ENCODE measurements at regions of chr12 and their contacts with region 1.

Region 1: GRCh38 chr12:12916135-12916944 is 25.0 kb downstream of the GPRC5A start:
- DNase-seq: peak; percentile 75 to 89
- H3K4me3 ChIP-seq: no peak overlapping the region
- H3K4me1 ChIP-seq: peaks cover 10% of the 10 kb centered on the region
- H3K27me3 ChIP-seq: no peaks in the 10 kb centered on the region

Region 2: GRCh38 chr12:12983420-12984035 is 67.2 kb after region 1 on chr12:
- in situ Hi-C with region 1: loop called (anchors 5 kb)
- DNase-seq: peak; percentile 63 to 88
- H3K4me3 ChIP-seq: no peak overlapping the region
- H3K4me1 ChIP-seq: peaks cover 21% of the 10 kb centered on the region
- H3K27me3 ChIP-seq: no peaks in the 10 kb centered on the region

Region 3: DNA sequence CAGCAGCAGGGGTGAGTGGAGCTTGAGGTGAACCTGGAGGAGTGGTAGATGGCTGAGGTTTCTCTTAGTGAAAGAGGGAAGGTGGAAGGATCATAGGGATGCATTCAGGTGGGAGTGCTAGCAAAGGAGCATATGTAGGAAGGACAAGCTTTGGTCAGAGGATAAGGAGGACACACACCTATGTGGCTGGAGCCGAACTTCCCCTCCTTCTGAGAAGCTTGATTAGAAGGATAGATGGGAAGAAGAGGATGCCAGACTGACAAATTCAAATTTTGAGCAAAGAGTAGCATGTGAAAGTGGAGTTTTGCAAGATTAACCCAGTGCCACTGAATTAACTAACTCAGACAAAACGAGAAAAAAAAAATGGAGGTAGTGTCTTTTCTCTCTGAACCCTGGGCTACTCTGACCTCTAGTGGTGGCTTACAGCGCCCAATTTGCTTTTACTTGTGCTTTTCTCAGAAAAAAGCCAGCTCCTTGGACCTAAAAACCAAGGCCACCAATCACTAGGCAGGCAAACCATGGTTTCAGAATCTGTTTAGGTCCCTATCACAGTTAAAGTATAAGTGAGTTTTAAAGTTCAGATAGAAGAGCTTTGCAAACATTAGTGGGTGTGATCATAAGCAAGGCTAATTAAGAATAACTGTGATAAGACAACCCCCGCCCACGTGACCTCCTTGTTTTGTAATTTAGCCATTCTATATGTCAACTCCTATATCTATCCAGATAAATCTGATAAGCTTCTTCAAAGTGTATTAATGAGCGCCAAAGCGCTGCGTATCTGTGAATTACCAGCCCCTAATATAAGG is 295.7 kb after region 1 on chr12:
- in situ Hi-C with region 1: loop called (anchors 5 kb)
- DNase-seq: peak; percentile 75 to 82
- H3K4me3 ChIP-seq: no peak overlapping the region
- H3K4me1 ChIP-seq: peaks cover 23% of the 10 kb centered on the region
- H3K27me3 ChIP-seq: no peaks in the 10 kb centered on the region

Region 4: DNA sequence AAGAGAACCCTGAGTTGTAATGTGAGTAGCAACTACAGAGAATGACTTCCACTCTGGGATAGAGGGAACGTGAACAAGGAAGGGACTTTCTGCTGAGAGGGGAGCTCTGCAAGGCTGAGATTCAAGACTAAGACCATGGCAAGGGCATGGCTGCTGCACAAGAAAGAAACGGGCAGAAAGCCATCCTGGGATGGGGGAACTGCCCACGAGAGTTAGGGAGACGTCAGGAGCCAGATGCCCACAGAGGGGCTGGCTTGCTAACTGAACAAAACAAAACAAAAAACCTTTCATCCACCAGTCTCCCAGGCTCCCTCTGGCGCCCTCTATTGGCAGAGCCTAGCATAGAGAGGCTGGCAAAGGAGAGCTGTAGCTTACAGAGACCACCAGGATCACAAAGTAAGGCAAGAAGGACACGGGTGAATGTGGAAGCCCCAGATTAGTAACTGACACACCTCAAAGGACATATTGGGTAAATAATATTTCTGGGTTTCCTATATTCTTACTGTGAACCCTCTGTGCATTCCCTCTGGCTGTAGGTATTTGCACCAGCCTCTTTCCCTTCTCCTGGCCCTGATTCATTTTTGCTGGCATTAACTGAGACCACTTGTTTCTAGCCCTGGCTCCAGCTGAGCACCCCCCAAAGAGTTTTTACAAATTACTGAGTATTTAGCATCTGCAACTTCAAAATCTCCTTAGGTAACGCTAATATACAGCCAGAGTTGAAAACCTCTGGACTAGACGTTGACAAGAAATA is 618.5 kb after region 1 on chr12:
- in situ Hi-C with region 1: loop called (anchors 25 kb)
- DNase-seq: peak; percentile 53 to 90
- H3K4me3 ChIP-seq: no peak overlapping the region
- H3K4me1 ChIP-seq: no peaks in the 10 kb centered on the region
- H3K27me3 ChIP-seq: no peaks in the 10 kb centered on the region

Region 5: DNA sequence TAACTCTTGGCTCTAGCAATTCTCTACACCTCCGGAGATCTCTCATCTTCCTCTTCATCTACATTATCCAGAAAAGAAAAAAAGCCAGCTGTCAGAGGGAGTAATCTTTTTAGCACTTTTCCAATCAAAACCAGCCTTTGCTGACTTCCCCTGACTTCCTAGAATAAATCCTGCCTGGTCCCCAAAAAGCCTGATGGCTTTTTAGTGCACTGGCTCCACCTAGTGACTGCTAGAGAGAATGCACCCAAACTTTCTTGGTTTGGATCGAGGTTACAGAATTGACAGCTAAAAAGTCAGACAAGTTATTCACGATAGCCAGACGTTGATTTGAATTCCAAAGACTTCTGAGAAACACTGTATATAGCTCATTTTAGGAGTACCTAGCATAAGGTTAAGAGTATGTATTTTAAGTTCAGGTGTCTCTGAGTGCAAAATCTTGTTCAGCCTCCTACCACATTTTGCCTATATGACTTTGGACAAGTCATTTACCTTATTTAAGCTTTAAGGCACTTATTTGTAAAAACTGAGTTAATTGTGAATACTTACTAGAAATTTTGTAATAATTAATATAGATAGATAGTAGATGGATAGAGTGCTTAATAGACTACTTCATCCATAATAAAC is 1250.8 kb after region 1 on chr12:
- in situ Hi-C with region 1: loop called (anchors 25 kb)
- DNase-seq: peak; percentile 35 to 56
- H3K4me3 ChIP-seq: no peak overlapping the region
- H3K4me1 ChIP-seq: no peaks in the 10 kb centered on the region
- H3K27me3 ChIP-seq: no peaks in the 10 kb centered on the region